Activated T-helper 2 cell treated with anti-CD3 and anti-CD28 coated beads, Interferon-gamma antibody, Interleukin-2, Interleukin-4, amounts not matched to agents 10 μg/mL and 5 μg/mL and 100 μg/mL, durations not matched to agents 14 hours and 24 hours and 36 hours (primary cell): ENCODE measurements at regions of chr18 and their contacts with region 1.

Region 1: GRCh38 chr18:24600076-24600654 is 139.7 kb downstream of the HRH4 start:
- DNase-seq: no peak
- H3K4me3 Mint-ChIP-seq: no peak overlapping the region
- H3K27ac Mint-ChIP-seq: no peak overlapping the region
- H3K4me1 Mint-ChIP-seq: no peaks in the 10 kb centered on the region
- H3K27me3 Mint-ChIP-seq: peaks cover 14% of the 10 kb centered on the region

Region 2: DNA sequence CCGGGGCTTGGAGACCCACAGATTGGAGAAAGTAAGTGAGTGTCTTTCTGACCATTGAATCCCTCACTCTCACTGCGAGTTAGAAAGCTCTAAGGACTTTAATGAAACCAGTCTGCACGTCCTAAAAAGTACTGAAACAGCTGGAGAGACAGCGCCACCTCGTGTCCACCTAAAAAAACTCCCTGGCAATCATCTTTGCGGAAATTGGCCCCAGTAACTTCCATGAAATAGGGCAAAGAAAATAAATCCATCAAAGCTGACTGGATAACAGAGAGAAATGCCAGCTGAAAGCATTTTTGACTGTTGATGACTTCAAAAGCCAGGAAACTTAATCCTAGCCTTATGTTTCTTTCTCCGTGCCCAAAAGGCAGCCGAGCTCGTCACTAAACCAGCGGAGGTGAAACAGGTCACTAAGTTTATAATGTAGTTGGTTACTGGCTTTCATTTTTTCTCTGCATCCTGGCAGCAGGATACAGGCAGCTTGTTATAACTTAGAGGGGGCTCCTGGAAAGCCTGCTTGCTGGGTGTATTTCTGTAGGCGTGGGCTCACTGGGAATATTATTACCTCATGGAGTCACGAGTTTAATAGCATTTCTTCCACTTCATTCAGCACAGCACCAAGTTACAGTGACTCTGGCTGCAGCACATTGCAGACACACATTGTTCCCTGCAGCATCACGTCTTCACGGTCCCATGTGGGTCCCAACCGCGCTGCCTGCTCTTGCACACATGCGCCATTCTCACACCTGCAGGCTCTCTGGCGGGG is 126.7 kb after region 1 on chr18:
- intact Hi-C with region 1: loop called (anchors 1 kb)
- DNase-seq: peak; percentile 29
- H3K4me3 Mint-ChIP-seq: no peak overlapping the region
- H3K27ac Mint-ChIP-seq: no peak overlapping the region
- H3K4me1 Mint-ChIP-seq: no peaks in the 10 kb centered on the region
- H3K27me3 Mint-ChIP-seq: peaks cover 10% of the 10 kb centered on the region